ENCODE measurements at regions of chr2 and their contacts with region 1.

Region 1: DNA sequence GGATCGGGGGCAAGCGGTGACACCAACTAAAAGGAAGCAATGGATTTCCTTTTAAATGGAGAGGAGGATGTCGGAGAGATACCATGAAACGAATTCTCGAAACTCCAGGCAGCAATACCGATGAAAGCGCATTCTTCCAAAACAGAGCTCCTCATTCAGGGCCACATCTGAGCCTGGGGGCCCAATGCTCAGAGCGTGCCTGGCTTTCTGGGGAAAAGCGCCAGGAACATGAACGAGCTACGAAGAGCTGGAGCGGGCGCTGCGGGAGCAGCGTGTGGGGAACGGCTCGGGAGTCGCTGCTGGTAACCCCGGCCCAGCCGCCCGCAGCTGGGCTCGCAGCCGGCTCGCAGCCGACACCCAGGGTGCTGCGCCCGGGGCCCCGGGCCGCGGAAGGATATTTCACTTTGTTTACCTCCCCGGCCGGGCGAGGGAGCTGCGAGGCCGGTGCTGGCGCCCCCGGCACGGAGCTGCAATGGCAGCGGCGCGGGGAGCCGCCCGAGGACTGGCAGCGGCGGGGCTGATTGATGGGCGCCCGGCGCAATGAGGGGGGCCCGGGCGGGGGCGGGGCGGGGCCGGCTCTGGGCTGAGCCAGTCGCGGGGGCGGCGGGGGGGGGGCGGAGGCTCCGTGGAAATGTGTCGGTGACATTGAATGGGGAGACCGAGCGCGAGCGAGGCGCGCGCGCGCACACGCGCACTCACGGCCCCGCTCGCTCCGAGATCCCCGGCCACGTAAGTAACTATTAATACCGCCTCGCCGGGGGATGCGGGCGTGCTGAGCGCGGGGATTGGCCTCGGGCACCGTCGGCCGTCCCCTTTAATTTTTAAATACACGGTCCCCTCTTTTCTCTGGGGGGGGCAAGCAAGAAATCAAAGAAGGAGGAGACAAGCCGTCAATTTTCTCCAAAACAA is at the start of gene TRIB2:
- DNase-seq: peak; percentile 92
- total RNA-seq, gene TRIB2: 49.9 TPM

Region 2: DNA sequence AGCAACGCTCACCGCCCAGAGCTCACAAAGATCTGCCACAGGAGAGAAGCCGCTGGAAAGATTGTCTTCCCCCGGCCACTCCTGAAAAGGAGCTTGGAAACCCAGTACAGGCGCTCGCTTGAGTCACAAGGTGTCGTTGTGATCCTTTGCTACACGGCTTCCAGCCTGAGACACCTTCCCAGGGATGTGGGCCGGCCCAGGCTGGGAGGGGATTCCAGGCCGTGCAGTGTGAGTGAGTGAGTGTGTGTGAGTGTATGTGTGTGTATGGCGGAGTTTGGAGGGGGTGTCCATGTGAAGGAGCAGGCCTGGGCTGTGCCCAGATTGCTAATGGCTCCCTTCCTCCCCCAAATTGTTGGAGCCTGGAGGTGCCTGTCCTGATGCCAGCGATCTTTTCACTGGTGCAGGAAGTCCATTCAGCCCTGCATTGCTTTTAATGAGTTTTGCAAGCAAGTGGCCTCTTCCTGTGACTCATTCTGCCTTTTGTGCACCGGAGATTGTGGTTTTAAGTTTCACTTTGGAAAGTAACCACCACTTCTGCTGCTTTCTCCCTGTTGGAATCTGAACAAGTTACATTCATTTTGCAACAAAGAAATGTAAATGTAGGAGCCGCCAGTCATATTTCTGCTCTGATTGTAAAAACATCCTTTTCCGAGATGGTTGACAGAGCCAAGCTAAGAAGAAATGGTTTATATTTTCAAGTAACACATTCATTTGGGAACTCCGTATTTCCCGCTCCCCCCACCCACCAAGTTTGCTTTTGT is 886.4 kb before region 1 on chr2:
- intact Hi-C with region 1: loop called (anchors 2 kb)
- DNase-seq: no peak

Region 3: GRCh38 chr2:12169721-12170120 is 546.8 kb before region 1 on chr2:
- intact Hi-C with region 1: loop called (anchors 5 kb)
- DNase-seq: no peak

Region 4: DNA sequence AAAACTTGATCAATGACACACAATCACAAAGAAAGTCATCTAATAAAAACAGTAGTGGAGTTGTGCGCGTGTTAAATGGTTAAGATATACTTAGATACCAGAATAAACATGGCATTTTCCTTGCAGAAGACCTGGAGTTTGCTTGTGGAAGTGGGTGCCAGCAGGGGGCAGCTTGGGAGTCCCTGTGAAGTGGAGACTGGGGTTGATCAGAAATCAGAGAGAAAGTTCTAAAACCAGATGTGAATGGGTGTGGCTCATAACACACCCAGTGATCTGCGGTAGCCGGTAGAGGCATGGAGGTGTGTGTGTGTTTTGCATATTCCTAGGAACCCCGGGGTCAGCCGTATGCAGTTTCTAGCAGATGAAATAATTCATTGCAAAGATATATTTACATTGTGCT is 299.9 kb before region 1 on chr2:
- intact Hi-C with region 1: loop called (anchors 2 kb)
- DNase-seq: no peak

Region 5: DNA sequence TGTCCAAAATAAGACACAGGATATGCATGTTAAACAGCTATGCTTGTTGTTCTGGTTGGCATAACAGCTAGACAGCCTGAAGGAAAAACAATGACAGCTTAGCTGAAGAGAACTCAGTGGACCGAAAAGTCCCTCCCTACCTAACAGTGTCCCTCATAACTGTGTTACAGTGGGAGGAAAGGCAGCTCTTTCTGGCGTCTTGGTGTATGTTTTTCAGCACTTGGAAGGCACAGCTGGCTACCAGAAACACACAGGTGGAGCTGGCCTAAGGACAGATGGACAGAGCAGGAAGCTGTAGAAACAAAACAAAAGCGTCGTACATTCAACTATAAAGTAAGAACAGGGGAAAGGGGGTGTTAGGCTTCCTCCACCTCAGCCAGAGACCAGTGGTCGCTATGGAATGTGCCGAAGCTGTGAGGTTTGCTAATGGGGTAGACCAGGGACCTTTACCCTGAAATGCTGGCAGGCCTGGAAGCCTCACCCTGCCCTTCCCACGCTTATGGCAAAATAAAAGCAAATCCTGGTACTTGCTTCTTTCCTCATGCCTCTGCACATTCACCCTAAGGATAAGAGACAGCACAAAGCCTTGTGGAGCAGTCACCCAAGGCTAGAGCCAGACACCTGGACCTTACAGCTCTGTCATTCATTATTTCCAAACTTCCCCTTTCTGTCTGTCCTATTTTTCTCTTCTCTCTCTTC is 103.2 kb before region 1 on chr2:
- intact Hi-C with region 1: no loop called
- DNase-seq: no peak

Region 6: DNA sequence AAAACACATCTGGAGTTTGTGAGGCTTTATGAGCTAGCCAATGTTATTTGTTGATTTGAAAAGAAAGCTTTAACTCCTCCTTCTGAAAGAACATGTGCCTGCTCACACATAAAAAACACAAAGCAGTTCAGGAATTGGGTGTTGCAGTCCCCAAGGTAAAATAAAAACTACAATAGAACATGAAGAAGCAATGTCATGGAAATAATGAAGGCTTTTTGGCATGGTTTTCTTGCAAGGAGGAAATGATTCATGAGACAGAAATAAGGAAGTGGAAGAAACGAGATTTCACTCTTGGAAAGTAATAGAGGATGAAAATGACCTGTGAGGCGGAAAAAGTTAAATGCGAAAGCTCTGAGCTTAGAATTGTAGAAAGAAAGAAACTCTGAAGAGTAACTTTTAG is 81.3 kb after region 1 on chr2:
- intact Hi-C with region 1: loop called (anchors 2 kb)
- DNase-seq: no peak

Region 7: DNA sequence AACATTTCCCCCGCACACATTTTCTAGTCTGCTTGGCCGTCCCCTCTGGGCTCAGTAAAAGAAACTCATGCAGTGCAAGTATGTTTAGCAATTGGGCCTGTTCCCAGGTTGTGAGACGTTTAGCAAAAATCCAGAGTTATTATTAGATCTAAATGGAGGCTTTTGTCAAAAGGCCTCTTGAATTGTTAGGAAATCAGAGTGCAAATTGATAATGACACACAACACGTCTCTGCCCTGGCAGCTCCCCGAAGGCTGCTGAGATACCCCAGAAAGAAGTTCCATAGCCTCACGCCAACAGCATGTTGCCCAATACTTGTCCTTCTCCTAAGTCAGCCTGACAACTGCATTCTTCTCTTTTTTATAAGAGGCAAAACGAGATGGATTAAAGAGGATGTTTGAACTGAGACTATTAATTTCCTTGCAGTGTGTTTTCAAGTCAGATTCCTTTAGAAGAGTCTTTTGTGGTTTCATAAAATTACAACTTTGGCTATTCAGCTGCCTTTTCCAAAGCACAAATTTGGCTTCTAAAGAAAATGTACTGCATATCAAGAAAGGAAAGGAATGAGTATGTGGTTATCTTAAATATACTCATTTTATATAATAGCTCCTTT is 202.4 kb after region 1 on chr2:
- intact Hi-C with region 1: loop called (anchors 5 kb)
- DNase-seq: no peak

Region 8: DNA sequence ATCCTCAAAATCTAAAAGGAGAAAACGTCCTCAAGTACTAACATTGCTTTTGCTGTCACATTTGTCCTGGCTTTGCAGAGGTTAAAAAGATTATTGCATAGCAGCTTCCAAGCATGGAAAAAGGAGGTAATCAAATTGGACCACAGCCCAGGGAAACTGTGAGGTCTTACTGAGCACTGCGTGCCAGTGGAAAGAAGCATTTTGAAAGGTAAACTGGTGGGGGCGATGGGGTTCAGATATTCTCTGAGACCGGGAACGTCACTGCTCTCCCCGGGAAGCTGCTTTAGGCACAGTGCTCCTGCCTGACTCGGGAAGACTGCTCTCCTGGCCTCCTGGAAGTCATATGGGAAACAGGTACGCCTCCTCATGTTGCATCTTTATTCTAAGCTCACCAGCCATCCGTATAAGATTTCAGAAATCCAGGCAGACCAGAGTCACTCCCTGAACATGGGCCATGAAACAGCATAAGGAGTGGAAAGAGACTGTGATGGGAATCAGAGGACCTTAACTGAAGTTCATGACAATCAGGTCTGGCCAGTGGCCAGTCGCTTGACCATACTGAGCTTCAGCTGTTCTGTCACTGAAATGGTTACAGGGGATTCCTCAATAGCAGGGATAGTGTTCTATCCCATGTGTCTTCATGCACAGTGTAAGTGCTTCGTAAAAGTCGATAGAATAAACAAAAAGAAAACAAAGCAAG is 284.3 kb after region 1 on chr2:
- intact Hi-C with region 1: loop called (anchors 1 kb)
- DNase-seq: no peak

Region 9: DNA sequence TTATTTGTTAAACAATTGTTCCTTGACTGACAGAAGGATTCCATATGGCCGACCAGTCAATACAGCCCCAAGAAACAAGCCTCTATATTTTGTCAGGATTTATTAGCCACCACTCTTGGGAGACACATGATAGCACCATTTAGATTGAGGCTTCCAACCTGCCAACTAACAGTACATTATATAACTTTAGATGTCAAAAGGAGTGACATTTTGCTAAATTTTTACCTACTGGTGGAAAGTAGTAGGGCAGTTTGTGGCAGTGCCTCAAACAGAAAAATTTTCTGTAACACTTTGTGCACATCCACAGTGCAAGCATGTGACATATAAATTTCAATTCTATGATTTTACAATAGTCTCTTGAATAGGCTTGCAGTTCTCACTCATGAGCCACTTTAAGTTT is 464.2 kb after region 1 on chr2:
- intact Hi-C with region 1: no loop called
- DNase-seq: no peak

Measured in cardiac septum (tissue), 1 donor.